OCI-LY7 (cell line): ENCODE measurements at regions of chr9 and their contacts with region 1.

Region 1: DNA sequence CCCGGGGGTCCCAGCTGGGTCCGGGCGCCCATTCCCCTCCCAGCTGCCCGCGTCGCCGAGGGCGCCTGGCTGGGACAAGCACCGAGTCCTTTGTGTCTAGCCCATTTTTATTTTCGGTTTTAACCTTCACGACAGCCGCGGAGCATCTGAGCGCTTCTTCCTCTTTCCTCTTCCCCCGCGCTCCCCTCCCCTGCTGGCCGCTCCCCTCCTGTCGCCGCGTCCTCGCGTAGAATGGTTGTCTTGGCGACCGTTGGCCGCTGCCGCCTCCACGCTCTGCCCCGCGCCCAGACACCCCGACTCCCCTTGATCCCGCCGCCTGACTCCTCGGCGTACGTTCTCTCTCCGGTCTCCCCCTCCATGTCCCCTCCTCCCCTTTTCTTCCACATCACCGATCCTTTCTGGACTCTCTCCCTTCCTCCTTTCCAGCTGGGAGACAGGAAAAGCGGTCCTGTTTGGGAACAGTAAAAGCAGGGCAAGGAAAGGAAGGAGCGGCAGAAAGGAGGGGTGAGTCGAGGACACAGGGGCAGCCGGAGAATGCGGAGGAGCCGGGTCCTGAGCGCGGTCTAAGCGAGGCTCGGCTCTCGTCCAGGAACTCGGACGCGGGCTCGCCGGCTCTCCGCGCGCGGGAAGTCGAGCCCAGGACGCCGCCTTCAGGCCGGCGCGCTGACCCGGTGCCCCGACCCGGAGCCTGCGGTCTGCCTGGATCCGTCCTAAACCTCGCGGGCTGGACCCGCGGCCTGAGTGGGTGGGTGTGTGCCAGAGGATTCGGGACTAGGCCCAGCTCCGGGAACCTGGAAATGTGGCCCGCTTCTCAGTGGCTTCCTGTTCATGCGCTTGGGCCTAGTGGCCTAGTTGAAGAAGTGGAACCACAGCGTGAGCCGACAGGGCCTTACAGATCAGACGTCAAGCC is 841 bp downstream of the CDKN2B-AS1 start:
- DNase-seq: peak; percentile 93
- H3K4me3 ChIP-seq: peak overlapping the region; percentile 78
- H3K27ac ChIP-seq: peak overlapping the region; percentile 97
- H3K4me1 ChIP-seq: peaks cover 21% of the 10 kb centered on the region
- CTCF ChIP-seq: peak; percentile 59

Region 2: DNA sequence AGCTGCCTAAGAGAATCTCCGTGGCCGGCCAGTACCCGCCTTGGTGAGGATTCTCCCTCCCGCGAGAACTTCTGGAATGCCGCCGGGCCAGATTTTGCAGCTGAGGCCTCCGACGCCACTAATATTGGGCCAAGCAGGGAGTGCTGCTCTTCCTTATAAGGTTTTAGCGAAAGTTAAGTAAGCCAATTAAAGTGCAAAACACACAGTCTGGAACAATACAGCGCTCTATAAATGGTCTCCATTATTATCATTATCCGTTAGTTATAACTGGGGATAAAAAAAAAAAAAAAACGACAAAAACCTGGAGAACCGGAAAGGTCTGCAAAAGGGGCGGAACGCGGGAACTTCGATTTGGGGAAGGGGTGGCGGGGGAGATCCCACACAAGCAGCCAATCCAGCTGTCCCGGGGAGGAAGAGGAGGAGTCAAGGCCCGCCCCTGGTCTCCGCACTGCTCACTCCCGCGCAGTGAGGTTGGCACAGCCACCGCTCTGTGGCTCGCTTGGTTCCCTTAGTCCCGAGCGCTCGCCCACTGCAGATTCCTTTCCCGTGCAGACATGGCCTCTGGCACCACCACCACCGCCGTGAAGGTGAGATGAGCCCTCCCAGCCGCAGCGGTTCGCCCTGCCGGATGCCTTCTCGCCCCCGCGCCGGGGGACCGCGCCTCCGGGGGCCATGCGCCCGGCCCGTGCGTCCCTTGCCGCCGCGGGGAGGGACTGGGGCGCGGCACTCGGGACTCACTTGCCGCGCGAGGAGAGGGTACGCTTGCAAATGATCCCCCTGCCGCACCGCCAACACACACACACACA is 193.0 kb before region 1 on chr9 and contains the start of gene MTAP:
- CTCF ChIA-PET with region 1: no interaction called
- POLR2A ChIA-PET with region 1: interaction called, 7 read pairs
- intact Hi-C with region 1: loop called (anchors 2 kb)
- DNase-seq: peak; percentile 90
- H3K4me3 ChIP-seq: peak within 1 kb of the TSS; percentile 97
- H3K27ac ChIP-seq: peak within 1 kb of the TSS; percentile 73
- H3K4me1 ChIP-seq: peaks cover 43% of the 10 kb centered on the region
- CTCF ChIP-seq: no peak
- total RNA-seq, gene MTAP: 41.6 and 50.4 TPM in 2 replicates

Region 3: GRCh38 chr9:21831961-21832509 is 163.4 kb before region 1 on chr9:
- CTCF ChIA-PET with region 1: no interaction called
- POLR2A ChIA-PET with region 1: no interaction called
- intact Hi-C with region 1: loop called (anchors 5 kb)
- DNase-seq: peak; percentile 16
- H3K4me3 ChIP-seq: no peak overlapping the region
- H3K27ac ChIP-seq: peak overlapping the region; percentile 58
- H3K4me1 ChIP-seq: peaks cover 33% of the 10 kb centered on the region
- CTCF ChIP-seq: no peak

Region 4: DNA sequence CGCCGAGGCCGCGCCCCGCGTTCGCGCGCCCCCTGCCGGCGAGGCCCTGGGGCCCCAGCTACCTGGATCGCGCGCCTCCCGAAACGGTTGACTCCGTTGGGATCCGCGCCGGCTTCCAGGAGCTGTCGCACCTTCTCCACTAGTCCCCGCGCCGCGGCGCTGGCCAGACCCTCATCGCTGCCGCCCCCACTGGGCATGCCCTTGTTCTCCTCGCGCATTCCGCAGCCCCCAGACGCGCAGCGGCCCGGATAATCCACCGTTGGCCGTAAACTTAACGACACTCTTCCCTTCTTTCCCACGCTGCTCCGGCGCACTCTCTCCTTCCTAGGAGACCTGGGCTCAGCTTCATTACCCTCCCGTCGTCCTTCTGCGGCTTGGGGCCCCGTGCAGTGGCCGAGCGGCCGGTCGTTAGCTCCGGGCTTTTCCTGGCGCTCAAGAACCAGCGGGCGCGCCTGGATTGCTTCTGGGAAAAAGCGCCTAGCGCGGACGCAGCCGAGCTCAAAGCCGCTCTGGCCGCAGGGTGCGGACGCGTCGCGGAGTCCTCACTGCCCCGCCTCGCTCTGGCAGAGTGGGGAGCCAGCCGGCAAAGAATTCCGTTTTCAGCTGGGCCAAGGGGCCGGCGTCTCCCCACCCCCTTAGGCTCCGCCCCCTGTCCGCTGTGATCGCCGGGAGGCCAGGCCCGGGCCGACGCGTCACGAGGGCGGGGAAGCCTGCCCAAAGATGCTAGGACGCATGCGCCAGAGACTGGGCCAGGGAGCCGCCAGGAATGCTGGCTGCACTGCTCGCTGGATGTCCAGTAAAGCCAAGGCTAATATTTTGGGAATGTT is 13.5 kb after region 1 on chr9 and contains the start of gene CDKN2B:
- CTCF ChIA-PET with region 1: interaction called, 4 read pairs
- POLR2A ChIA-PET with region 1: interaction called, 34 read pairs
- intact Hi-C with region 1: loop called (anchors 1 kb)
- DNase-seq: peak; percentile 90
- H3K4me3 ChIP-seq: peak within 1 kb of the TSS; percentile 73
- H3K27ac ChIP-seq: no peak within 1 kb of the TSS
- H3K4me1 ChIP-seq: peaks cover 41% of the 10 kb centered on the region
- CTCF ChIP-seq: peak; percentile 94
- total RNA-seq, gene CDKN2B: 2.0 TPM in 2 replicates